GM12878 (cell line): ENCODE measurements at regions of chr5 and their contacts with region 1.

Region 1: GRCh38 chr5:147332658-147333057 is 97.8 kb downstream of the STK32A start:
- DNase-seq: peak; percentile 32
- ATAC-seq: peak; percentile 71
- H3K4me3 ChIP-seq: no peak overlapping the region
- H3K27ac ChIP-seq: no peak overlapping the region
- H3K4me1 ChIP-seq: no peaks in the 10 kb centered on the region
- H3K27me3 ChIP-seq: no peaks in the 10 kb centered on the region; a peak in 1 of 4 replicates
- CTCF ChIP-seq: no peak
- EP300 ChIP-seq: no peak
- POLR2A ChIP-seq: no peak
- RAD21 ChIP-seq: no peak

Region 2: GRCh38 chr5:147223948-147224791 is 108.5 kb before region 1 on chr5:
- CTCF ChIA-PET with region 1: no interaction called
- POLR2A ChIA-PET with region 1: no interaction called
- RAD21 ChIA-PET with region 1: no interaction called
- SMC1A ChIA-PET with region 1: no interaction called
- in situ Hi-C with region 1: no loop called
- intact Hi-C with region 1: no loop called
- DNase-seq: no peak
- ATAC-seq: peak; percentile 86
- H3K4me3 ChIP-seq: no peak overlapping the region
- H3K27ac ChIP-seq: no peak overlapping the region
- H3K4me1 ChIP-seq: no peaks in the 10 kb centered on the region
- H3K27me3 ChIP-seq: no peaks in the 10 kb centered on the region
- CTCF ChIP-seq: peak; percentile 36 to 58 (median 39); a peak in 5 of 6 replicates
- EP300 ChIP-seq: no peak
- POLR2A ChIP-seq: no peak
- RAD21 ChIP-seq: peak; percentile 56

Region 3: DNA sequence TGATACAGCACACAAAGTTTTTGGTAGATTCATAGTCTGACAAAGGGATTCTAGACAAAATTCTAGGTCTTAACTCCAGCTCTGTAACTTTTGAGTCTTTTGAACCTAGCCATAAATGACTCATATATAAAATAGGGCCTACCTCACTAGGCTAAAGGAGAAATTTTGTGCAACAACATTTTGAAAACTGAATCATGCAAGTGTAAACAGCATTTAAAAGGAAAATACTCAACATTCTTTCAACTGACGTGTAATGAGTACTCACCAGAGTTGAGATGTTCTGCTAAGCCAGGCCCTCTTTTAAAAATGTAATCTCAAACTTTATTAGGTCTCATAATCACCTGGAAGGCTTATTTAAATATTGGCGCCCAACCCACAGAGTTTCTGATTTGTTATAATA is 15.4 kb after region 1 on chr5:
- CTCF ChIA-PET with region 1: interaction called, 3 read pairs
- POLR2A ChIA-PET with region 1: no interaction called
- RAD21 ChIA-PET with region 1: interaction called, 4 read pairs
- SMC1A ChIA-PET with region 1: interaction called, 14 read pairs
- in situ Hi-C with region 1: no loop called
- intact Hi-C with region 1: no loop called
- DNase-seq: no peak
- ATAC-seq: no peak
- H3K4me3 ChIP-seq: no peak overlapping the region
- H3K27ac ChIP-seq: no peak overlapping the region
- H3K4me1 ChIP-seq: no peaks in the 10 kb centered on the region
- H3K27me3 ChIP-seq: no peaks in the 10 kb centered on the region
- CTCF ChIP-seq: no peak
- EP300 ChIP-seq: no peak
- POLR2A ChIP-seq: no peak
- RAD21 ChIP-seq: no peak